Common myeloid progenitor, CD34-positive (primary cell): ENCODE measurements at regions of chr19 and their contacts with region 1.

Region 1: GRCh38 chr19:6238643-6239281 is 41.0 kb downstream of the MLLT1 start:
- DNase-seq: peak in 2 of 3 donors; percentile 62 to 75
- H3K4me3 ChIP-seq: peak overlapping the region in 3 of 7 experiments; percentile 4 to 32 (median 6)
- H3K27ac ChIP-seq: peak overlapping the region; percentile 28 to 41
- H3K4me1 ChIP-seq: peaks cover 5 to 70% (median 63%) of the 10 kb centered on the region in 4 experiments
- H3K27me3 ChIP-seq: no peaks in the 10 kb centered on the region

Region 2: DNA sequence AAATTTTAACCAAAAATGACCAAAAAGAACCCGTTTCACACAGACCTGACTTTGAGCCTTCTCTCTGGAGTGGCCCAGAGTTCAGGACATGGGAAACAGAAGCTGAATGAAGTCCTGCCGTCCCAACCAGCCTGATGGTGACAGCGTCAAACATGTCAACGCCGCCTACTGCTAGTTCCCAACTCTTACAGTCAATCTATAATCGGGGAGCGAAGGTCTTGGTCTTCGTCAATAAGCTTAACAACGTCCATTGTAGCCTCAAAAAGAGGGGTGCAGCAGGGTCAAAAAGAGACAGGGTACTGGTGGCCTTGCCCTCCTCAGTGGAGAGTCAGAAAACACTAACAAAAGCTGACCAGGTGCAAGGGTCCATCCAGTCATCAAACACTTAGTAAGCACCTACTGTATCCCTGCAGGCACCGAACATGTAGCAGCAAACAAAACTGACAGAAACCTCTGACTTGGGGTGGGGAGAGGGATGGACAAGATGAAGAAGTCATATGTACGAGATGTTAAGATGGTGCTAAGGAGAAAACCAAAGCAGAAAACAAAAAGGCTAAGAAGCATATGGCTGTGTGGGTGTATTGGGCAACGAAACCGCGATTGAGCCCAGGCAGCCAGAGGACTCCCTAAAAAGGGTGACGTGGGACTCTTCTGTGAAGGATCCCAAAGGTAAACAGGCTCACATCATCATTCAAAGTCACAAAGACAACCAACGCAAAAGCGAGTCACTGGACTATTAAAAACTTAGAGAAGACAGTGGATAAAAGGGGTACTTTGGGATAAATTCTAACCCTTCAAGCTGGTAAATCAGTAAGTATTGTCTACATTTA is 29.0 kb after region 1 on chr19:
- CTCF ChIA-PET with region 1: interaction called, 10 read pairs
- POLR2A ChIA-PET with region 1: no interaction called
- DNase-seq: no peak
- H3K4me3 ChIP-seq: no peak overlapping the region
- H3K27ac ChIP-seq: peak overlapping the region in 1 of 2 experiments; percentile 25
- H3K4me1 ChIP-seq: peaks cover 0 to 6% (median 0%) of the 10 kb centered on the region in 4 experiments
- H3K27me3 ChIP-seq: no peaks in the 10 kb centered on the region

Region 3: DNA sequence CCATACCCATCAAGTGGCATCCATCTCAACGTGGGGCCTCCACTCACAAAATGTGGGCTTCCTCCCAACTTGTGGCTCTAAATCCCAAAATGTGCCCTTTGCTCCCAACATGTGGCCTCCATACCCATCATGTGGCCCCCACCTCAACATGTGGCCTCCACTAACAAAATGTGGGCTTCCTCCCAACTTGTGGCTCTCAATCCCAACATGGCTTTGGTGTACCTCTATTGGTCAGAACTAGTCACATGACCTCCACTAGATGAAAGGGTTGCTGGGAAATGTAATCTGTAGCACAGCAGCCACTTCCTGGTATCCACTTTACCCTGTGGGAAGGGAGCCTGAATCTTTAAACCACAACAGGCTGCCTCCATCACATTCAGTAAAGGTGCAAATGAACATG is 104.7 kb after region 1 on chr19:
- CTCF ChIA-PET with region 1: no interaction called
- POLR2A ChIA-PET with region 1: no interaction called
- DNase-seq: no peak
- H3K4me3 ChIP-seq: no peak overlapping the region
- H3K27ac ChIP-seq: no peak overlapping the region
- H3K4me1 ChIP-seq: no peaks in the 10 kb centered on the region
- H3K27me3 ChIP-seq: no peaks in the 10 kb centered on the region